AG04449 (cell line): ENCODE measurements at regions of chr1 and their contacts with region 1.

Region 1: DNA sequence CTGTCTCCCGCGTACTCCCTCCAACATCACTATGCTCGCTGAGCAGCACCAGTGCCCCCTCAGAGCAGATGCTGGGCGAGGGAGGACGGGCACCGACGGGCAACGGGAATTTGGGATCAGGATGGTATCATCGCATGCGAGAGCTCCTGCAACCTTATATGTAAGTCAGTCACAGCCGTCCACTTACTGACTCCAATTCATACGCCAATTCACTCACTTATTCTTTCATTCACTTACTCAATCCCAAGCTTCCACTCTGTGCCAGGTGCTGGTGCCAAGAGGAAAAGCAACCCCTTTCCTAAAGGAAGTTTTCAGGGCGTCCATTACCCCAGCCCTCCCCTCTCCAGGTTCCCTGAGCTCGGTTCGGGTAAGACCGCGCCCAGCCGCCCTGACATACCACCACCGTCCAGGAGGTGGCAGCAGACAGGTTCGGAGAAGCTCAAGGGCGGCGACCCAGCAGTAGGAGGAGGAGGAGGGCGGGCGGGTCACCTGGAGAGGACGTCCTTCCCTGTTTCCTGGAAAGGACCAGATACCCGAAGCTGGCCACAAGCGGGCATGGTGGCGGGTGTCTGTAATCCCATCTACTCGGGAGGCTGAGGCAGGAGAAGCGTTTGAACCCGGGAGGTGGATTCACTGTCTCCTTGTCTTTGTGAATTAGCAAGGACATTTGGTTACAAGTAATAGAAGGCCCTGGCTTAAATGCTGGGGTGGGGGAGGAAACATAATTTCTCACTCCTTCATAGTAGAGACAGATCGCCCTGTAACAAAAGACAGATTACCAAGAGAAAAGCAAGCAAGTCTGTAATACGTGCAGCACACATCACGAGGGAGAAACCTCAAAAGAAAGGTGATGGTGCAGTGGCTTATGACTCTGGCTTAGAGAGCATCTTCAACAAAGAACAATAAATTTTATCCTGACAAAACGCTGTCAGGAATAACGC is 7.6 kb upstream of the IL22RA1 start:
- DNase-seq: no peak
- H3K4me3 ChIP-seq: no peak overlapping the region; the same call in 1 of the 2 replicates
- CTCF ChIP-seq: peak; percentile 94

Region 2: DNA sequence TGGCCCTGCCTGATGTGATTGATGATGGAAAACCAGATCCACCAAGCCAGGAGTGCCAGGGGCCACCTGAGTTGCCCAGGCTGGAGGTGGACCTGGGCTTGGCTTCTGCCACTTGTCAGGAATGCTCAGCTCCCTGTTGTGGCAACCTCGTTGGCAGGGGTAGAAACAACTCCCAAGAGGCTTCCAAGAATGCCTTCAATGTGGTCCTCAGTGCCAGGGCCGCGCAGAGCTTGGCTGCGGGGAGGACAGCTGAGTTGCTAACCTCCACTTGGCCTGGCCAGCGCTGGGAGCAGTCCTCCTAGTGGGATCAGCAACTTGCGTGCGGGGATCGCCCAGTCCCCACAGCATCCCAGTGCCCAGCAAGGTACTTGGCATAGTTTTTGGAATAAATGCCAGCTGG is 47.5 kb before region 1 on chr1:
- CTCF ChIA-PET with region 1: interaction called, 10 read pairs
- POLR2A ChIA-PET with region 1: no interaction called
- DNase-seq: no peak
- H3K4me3 ChIP-seq: no peak overlapping the region
- CTCF ChIP-seq: no peak

Region 3: GRCh38 chr1:24119859-24120756 is 30.4 kb before region 1 on chr1:
- CTCF ChIA-PET with region 1: interaction called, 21 read pairs
- POLR2A ChIA-PET with region 1: no interaction called
- DNase-seq: no peak
- H3K4me3 ChIP-seq: no peak overlapping the region
- CTCF ChIP-seq: no peak

Region 4: GRCh38 chr1:24137031-24137430 is 13.5 kb before region 1 on chr1:
- CTCF ChIA-PET with region 1: interaction called, 26 read pairs
- POLR2A ChIA-PET with region 1: interaction called, 4 read pairs
- DNase-seq: no peak
- H3K4me3 ChIP-seq: no peak overlapping the region
- CTCF ChIP-seq: no peak

Region 5: DNA sequence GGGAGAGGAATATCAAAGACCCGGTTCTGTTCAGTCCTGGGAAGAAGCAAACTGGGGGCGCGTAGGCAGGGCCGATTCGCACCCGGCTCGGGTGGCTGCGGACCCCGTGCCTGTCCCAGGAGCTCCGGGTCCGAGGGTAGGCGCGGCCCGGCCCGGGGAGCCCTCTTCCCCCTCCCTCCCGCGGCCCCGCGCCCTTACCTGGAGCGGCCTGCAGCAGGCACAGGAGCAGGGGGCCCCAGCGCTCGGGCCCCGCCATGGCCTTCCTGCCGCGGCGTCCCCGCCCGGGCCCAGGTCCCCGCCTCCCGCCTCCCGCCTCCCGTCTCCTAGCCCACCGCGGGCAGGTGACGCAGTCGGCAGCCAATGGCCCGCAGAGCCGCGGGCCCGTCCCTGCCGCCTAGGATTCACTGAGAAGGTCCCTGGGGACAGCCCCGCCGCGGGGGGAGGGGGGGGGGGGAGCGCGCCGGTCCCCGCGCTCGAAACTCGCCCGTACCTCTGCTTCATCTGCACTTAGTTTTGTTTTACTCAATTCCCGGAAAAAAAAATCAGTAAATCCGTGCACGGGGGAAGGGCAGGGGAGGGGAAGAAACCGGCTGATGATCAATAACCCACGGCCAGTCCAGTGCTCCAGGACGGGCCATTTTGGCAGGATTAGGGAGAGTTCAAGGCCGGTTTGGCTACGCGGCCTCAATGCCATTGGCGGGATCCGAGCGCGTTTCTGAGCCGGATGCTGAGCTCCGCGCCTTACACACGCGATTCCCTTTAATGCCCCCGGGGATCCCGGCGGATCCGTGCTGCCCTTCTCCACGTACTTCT is 36.7 kb after region 1 on chr1 and contains the start of gene IFNLR1:
- CTCF ChIA-PET with region 1: interaction called, 15 read pairs
- POLR2A ChIA-PET with region 1: no interaction called
- DNase-seq: no peak
- H3K4me3 ChIP-seq: peak within 1 kb of the TSS; percentile 48
- CTCF ChIP-seq: no peak

Region 6: DNA sequence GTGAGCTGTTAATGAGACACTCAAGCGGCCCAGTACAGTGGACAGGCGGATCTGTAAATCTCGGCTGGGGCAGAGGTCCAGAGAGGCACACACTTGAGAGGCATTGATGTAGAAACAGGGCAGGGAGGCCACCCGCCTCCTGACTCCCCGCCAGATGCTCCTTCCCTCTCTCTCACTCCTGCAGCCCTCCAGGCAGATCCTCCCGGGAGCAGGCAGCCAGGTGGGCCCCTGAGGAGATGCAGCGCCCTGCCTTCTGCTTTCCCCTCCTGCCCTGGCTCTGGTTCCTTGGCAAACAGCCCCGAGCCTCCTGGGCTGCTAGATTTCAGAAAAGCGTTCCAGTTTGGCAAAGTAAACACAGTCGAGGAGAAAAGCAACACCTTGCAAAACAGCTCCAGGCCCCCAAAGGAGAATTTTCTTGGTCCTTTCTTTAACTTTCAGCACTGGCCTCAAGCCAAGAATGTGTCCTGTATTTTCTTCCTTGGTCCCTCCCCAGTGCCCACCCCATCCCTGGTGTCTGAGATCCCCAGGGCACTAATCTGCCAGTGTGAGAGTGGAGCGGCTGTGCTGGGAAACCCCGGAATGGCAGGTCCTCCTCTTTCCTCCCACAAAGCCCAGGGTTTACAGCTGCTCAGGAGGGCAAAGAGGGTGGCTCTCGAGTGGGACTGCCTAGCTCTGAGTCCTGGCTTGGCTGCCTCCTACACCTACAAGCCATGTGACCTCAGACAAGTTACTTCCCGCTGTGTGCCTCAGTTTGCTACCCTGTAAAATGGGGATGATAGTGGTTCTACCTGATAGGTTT is 66.0 kb after region 1 on chr1:
- CTCF ChIA-PET with region 1: no interaction called
- POLR2A ChIA-PET with region 1: no interaction called
- DNase-seq: no peak
- H3K4me3 ChIP-seq: no peak overlapping the region
- CTCF ChIP-seq: no peak